Transverse colon (tissue), 4 donors: ENCODE measurements at regions of chr3 and their contacts with region 1.

Region 1: DNA sequence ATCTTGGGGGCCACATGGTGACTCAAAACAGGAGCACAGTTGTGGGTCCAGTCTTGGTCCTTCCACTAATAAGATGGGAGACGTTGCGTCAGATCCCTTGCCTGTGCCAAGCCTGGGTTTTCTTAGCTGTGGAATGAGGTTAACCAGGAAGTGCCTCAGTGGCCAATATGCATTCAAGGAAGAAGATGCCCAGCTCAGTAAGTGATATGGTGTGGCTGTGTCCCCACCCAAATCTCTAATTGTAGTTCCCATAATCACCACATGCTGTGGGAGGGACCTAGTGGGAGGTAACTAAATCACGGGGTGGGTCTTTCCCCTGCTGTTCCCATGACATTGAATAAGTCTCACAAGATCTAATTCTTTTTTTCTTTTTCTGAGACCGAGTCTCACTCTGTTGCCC is 6.4 kb downstream of the ALG1L2 start:
- DNase-seq: no peak
- H3K4me3 ChIP-seq: no peak overlapping the region
- H3K27ac ChIP-seq: no peak overlapping the region
- H3K4me1 ChIP-seq: no peaks in the 10 kb centered on the region
- H3K27me3 ChIP-seq: no peaks in the 10 kb centered on the region
- CTCF ChIP-seq: no peak
- EP300 ChIP-seq: no peak
- POLR2A ChIP-seq: no peak

Region 2: DNA sequence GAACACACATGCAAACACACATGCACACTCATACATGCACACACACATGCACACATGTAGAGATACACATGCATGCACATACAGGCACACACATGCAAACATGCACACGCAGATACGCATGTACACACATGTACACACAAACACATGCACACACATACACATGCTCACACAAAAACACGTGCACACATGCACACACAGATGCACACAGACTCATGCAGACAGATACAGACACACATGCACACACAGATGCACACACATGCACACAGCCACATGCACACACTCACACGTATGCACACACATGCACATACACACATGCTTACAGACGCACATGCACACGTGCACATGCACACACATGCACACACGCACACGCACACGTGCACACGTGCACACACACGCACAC is 43.7 kb before region 1 on chr3:
- in situ Hi-C with region 1: loop called in 2 of 4 experiments (anchors 5 kb)
- intact Hi-C with region 1: no loop called
- DNase-seq: no peak
- H3K4me3 ChIP-seq: no peak overlapping the region
- H3K27ac ChIP-seq: no peak overlapping the region
- H3K4me1 ChIP-seq: no peaks in the 10 kb centered on the region
- H3K27me3 ChIP-seq: no peaks in the 10 kb centered on the region
- CTCF ChIP-seq: no peak
- EP300 ChIP-seq: no peak
- POLR2A ChIP-seq: no peak